Activated CD4-positive, alpha-beta memory T cell treated with anti-CD3 and anti-CD28 coated beads for 36 hours (primary cell): ENCODE measurements at regions of chr13 and their contacts with region 1.

Region 1: GRCh38 chr13:52450012-52450792 is at the start of gene VPS36:
- DNase-seq: peak; percentile 95
- H3K4me3 Mint-ChIP-seq: peak within 1 kb of the TSS; percentile 96
- H3K27ac Mint-ChIP-seq: peak within 1 kb of the TSS; percentile 88
- H3K4me1 Mint-ChIP-seq: peaks cover 39% of the 10 kb centered on the region
- H3K27me3 Mint-ChIP-seq: peaks cover under 1% of the 10 kb centered on the region
- total RNA-seq, gene VPS36: 24.7 to 26.6 TPM

Region 2: GRCh38 chr13:51583875-51584730 is 866.1 kb before region 1 on chr13 and contains the start of gene WDFY2:
- CTCF ChIA-PET with region 1: no interaction called
- POLR2A ChIA-PET with region 1: no interaction called
- intact Hi-C with region 1: loop called (anchors 10 kb)
- DNase-seq: peak; percentile 99
- H3K4me3 Mint-ChIP-seq: peak within 1 kb of the TSS; percentile 87
- H3K27ac Mint-ChIP-seq: peak within 1 kb of the TSS; percentile 94
- H3K4me1 Mint-ChIP-seq: peaks cover 35% of the 10 kb centered on the region
- H3K27me3 Mint-ChIP-seq: no peaks in the 10 kb centered on the region
- total RNA-seq, gene WDFY2: 9.3 to 11.2 TPM

Region 3: GRCh38 chr13:52011632-52012511 is 438.3 kb before region 1 on chr13 and contains the start of gene ALG11:
- CTCF ChIA-PET with region 1: interaction called, 3 read pairs
- POLR2A ChIA-PET with region 1: no interaction called
- intact Hi-C with region 1: loop called (anchors 1 kb)
- DNase-seq: peak; percentile 100
- H3K4me3 Mint-ChIP-seq: peak within 1 kb of the TSS; percentile 99
- H3K27ac Mint-ChIP-seq: peak within 1 kb of the TSS; percentile 83
- H3K4me1 Mint-ChIP-seq: peaks cover 9% of the 10 kb centered on the region
- H3K27me3 Mint-ChIP-seq: peaks cover 18% of the 10 kb centered on the region
- total RNA-seq, gene ALG11: 19.0 to 19.5 TPM

Region 4: DNA sequence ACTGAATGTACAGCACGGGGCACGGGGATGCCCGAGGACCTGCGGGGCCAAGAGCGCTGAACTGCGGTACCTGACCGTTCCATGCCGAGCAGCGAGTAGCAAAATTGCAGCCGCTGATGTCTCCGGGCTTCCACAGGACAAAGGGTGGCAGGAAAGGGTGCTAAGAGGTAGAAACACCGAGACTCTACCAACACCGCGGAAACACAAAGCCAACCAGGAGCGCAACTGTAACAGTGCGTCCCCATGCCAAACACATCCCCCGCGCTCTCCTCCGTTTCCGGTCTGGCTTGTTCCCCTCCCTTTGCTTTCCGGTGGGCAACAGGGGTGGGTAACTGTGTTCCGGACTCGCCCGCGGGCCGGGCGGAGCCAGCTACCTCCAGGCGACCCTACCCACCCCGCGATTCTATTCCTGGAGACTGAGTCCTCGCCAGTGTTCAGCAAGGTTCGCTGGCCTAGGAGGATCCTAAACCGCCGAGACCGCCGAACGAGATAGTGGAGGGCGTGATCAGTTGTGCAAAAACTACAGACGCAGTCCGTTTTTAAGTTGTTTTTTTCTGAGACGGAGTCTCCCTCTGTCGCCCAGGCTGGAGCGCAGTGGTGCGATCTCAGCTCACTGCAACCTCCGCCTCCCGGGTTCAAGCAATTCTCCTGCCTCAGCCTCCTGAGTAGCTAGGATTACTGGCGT is 255.9 kb before region 1 on chr13:
- CTCF ChIA-PET with region 1: interaction called, 9 read pairs
- POLR2A ChIA-PET with region 1: no interaction called
- intact Hi-C with region 1: loop called (anchors 1 kb)
- DNase-seq: peak; percentile 93
- H3K4me3 Mint-ChIP-seq: peak overlapping the region; percentile 97
- H3K27ac Mint-ChIP-seq: peak overlapping the region; percentile 91
- H3K4me1 Mint-ChIP-seq: peaks cover 22% of the 10 kb centered on the region
- H3K27me3 Mint-ChIP-seq: no peaks in the 10 kb centered on the region

Region 5: DNA sequence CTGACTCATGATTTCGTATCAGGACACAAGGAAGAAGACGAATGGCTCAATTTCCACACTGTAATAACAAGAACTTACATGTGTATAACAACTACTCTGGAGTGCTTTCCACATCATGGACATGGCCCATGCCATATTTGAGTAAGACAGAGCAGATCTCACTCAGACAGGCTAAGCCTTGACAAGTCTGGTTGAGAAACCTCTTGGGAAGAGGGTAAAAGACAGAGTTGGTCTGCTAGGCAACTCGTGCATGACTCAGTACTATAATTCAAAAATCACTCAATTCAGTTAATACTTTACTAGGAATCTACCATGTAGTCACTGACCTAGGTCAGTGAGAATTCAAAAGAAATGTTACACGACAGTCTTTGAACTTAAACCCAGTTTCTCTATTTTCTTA is 38.6 kb before region 1 on chr13:
- CTCF ChIA-PET with region 1: interaction called, 3 read pairs
- POLR2A ChIA-PET with region 1: no interaction called
- intact Hi-C with region 1: loop called (anchors 1 kb)
- DNase-seq: peak; percentile 35
- H3K4me3 Mint-ChIP-seq: no peak overlapping the region
- H3K27ac Mint-ChIP-seq: peak overlapping the region; percentile 20
- H3K4me1 Mint-ChIP-seq: peaks cover 2% of the 10 kb centered on the region
- H3K27me3 Mint-ChIP-seq: no peaks in the 10 kb centered on the region

Region 6: DNA sequence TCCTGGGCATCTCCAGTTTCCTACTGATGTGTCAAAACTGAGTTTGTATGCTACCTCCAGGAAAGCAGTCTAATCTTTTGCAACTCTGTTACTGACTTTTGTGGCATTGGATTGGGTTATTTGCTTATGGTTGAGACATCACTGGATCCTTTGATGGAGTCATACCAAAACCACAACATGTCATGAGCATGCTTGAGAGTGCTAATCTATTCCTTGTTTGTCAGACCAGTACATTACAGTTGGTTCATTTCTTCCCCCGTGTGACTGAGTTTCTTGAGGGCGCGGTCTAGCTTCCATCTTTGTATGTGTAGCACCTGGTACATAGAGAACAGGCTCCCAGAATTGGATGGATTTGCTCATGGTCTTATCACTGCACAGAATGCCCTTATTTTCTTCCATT is 245.7 kb after region 1 on chr13:
- CTCF ChIA-PET with region 1: no interaction called
- POLR2A ChIA-PET with region 1: no interaction called
- intact Hi-C with region 1: loop called (anchors 1 kb)
- DNase-seq: peak; percentile 71
- H3K4me3 Mint-ChIP-seq: no peak overlapping the region
- H3K27ac Mint-ChIP-seq: peak overlapping the region; percentile 31
- H3K4me1 Mint-ChIP-seq: peaks cover 15% of the 10 kb centered on the region
- H3K27me3 Mint-ChIP-seq: no peaks in the 10 kb centered on the region